ENCODE measurements at regions of chr6 and their contacts with region 1.

Region 1: DNA sequence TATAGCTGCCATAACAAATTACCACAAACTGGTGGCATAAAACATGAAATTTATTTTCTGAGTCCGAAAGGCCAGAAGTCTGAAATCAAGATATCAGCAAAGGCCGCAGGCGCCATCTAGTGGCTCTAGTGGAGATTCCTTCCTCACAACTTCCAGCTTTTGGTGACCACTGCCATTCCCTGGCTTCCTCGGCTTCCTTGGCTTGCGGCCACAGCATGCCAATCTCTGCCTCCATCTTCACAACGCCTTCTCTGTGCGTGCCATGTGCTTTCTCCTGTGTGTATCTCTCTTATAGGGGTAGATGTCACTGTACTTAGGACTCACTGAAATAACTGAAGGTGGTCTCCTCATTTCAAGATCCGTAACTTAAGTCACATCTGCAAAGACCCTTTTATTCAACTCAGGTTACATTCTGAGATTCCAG is 5.4 kb upstream of the PLAGL1 start:
- DNase-seq: peak; percentile 56
- H3K4me3 ChIP-seq: no peak overlapping the region
- H3K27ac ChIP-seq: no peak overlapping the region
- H3K4me1 ChIP-seq: no peaks in the 10 kb centered on the region
- H3K27me3 ChIP-seq: peaks cover 2% of the 10 kb centered on the region
- CTCF ChIP-seq: peak; percentile 88 to 89

Region 2: GRCh38 chr6:143450453-143451371 is 562.8 kb before region 1 on chr6 and contains the starts of genes ADAT2 and PEX3:
- CTCF ChIA-PET with region 1: no interaction called
- dilution Hi-C with region 1: no loop called
- in situ Hi-C with region 1: no loop called
- intact Hi-C with region 1: loop called (anchors 10 kb)
- DNase-seq: peak; percentile 94
- H3K4me3 ChIP-seq: peak within 1 kb of the TSS; percentile 63 to 93 (median 82)
- H3K27ac ChIP-seq: peak within 1 kb of the TSS; percentile 85
- H3K4me1 ChIP-seq: no peaks in the 10 kb centered on the region
- H3K27me3 ChIP-seq: no peaks in the 10 kb centered on the region
- CTCF ChIP-seq: no peak
- total RNA-seq, gene ADAT2: 5.7 to 17.6 TPM
- total RNA-seq, gene PEX3: 24.7 to 38.0 TPM

Region 3: GRCh38 chr6:143513410-143513809 is 500.1 kb before region 1 on chr6:
- CTCF ChIA-PET with region 1: no interaction called
- dilution Hi-C with region 1: no loop called
- in situ Hi-C with region 1: no loop called
- intact Hi-C with region 1: loop called (anchors 1 kb)
- DNase-seq: no peak
- H3K4me3 ChIP-seq: no peak overlapping the region
- H3K27ac ChIP-seq: no peak overlapping the region
- H3K4me1 ChIP-seq: peaks cover 13% of the 10 kb centered on the region
- H3K27me3 ChIP-seq: peaks cover 2% of the 10 kb centered on the region
- CTCF ChIP-seq: peak; percentile 21 to 58

Region 4: GRCh38 chr6:143592335-143592734 is 421.2 kb before region 1 on chr6:
- CTCF ChIA-PET with region 1: no interaction called
- dilution Hi-C with region 1: no loop called
- in situ Hi-C with region 1: no loop called
- intact Hi-C with region 1: no loop called
- DNase-seq: no peak
- H3K4me3 ChIP-seq: no peak overlapping the region
- H3K27ac ChIP-seq: no peak overlapping the region
- H3K4me1 ChIP-seq: no peaks in the 10 kb centered on the region
- H3K27me3 ChIP-seq: no peaks in the 10 kb centered on the region
- CTCF ChIP-seq: peak; percentile 41

Region 5: GRCh38 chr6:143940011-143940597 is 73.4 kb before region 1 on chr6:
- CTCF ChIA-PET with region 1: interaction called, 6 read pairs
- dilution Hi-C with region 1: no loop called
- in situ Hi-C with region 1: no loop called
- intact Hi-C with region 1: loop called (anchors 1 kb)
- DNase-seq: peak; percentile 48
- H3K4me3 ChIP-seq: no peak overlapping the region
- H3K27ac ChIP-seq: no peak overlapping the region
- H3K4me1 ChIP-seq: no peaks in the 10 kb centered on the region
- H3K27me3 ChIP-seq: no peaks in the 10 kb centered on the region
- CTCF ChIP-seq: peak; percentile 88

Region 6: GRCh38 chr6:144482142-144482541 is 468.6 kb after region 1 on chr6:
- CTCF ChIA-PET with region 1: no interaction called
- dilution Hi-C with region 1: no loop called
- in situ Hi-C with region 1: no loop called
- intact Hi-C with region 1: no loop called
- DNase-seq: peak; percentile 60
- H3K4me3 ChIP-seq: no peak overlapping the region
- H3K27ac ChIP-seq: no peak overlapping the region
- H3K4me1 ChIP-seq: no peaks in the 10 kb centered on the region
- H3K27me3 ChIP-seq: no peaks in the 10 kb centered on the region
- CTCF ChIP-seq: peak; percentile 77 to 78

Measured in mammary epithelial cell (primary cell).